ENCODE measurements at regions of chr9 and their contacts with region 1.

Region 1: GRCh38 chr9:110088099-110088498 is 119.9 kb downstream of the C9orf152 start:
- DNase-seq: no peak
- H3K4me3 ChIP-seq: no peak overlapping the region
- H3K27ac ChIP-seq: no peak overlapping the region
- H3K4me1 ChIP-seq: peaks cover 34% of the 10 kb centered on the region
- H3K27me3 ChIP-seq: no peaks in the 10 kb centered on the region
- CTCF ChIP-seq: no peak

Region 2: GRCh38 chr9:110133608-110134210 is 45.6 kb after region 1 on chr9:
- CTCF ChIA-PET with region 1: no interaction called
- POLR2A ChIA-PET with region 1: no interaction called
- intact Hi-C with region 1: loop called (anchors 1 kb)
- DNase-seq: peak; percentile 49 to 90
- H3K4me3 ChIP-seq: no peak overlapping the region
- H3K27ac ChIP-seq: peak overlapping the region; percentile 93
- H3K4me1 ChIP-seq: peaks cover 71% of the 10 kb centered on the region
- H3K27me3 ChIP-seq: no peaks in the 10 kb centered on the region
- CTCF ChIP-seq: no peak

Region 3: GRCh38 chr9:110141227-110141793 is 53.2 kb after region 1 on chr9:
- CTCF ChIA-PET with region 1: no interaction called
- POLR2A ChIA-PET with region 1: no interaction called
- intact Hi-C with region 1: loop called (anchors 1 kb)
- DNase-seq: peak in 1 of 2 experiments; percentile 70
- H3K4me3 ChIP-seq: no peak overlapping the region
- H3K27ac ChIP-seq: peak overlapping the region; percentile 27
- H3K4me1 ChIP-seq: peaks cover 16% of the 10 kb centered on the region
- H3K27me3 ChIP-seq: no peaks in the 10 kb centered on the region
- CTCF ChIP-seq: no peak

Region 4: GRCh38 chr9:110170357-110171257 is 82.5 kb after region 1 on chr9:
- CTCF ChIA-PET with region 1: no interaction called
- POLR2A ChIA-PET with region 1: interaction called, 19 read pairs
- intact Hi-C with region 1: no loop called
- DNase-seq: no peak
- H3K4me3 ChIP-seq: no peak overlapping the region
- H3K27ac ChIP-seq: no peak overlapping the region
- H3K4me1 ChIP-seq: no peaks in the 10 kb centered on the region
- H3K27me3 ChIP-seq: no peaks in the 10 kb centered on the region
- CTCF ChIP-seq: no peak

Measured in PC-9 (cell line).